ENCODE measurements at regions of chr16 and their contacts with region 1.

Region 1: GRCh38 chr16:71288890-71289733 is at the start of gene CMTR2:
- DNase-seq: peak; percentile 89
- H3K4me3 Mint-ChIP-seq: peak within 1 kb of the TSS; percentile 93
- H3K27ac Mint-ChIP-seq: peak within 1 kb of the TSS; percentile 90
- H3K4me1 Mint-ChIP-seq: peaks cover 26% of the 10 kb centered on the region
- H3K27me3 Mint-ChIP-seq: peaks cover 13% of the 10 kb centered on the region
- total RNA-seq, gene CMTR2: 18.2 and 20.7 TPM in 2 replicates

Region 2: GRCh38 chr16:70746708-70747424 is 542.2 kb before region 1 on chr16:
- intact Hi-C with region 1: loop called (anchors 5 kb)
- DNase-seq: peak; percentile 39
- H3K4me3 Mint-ChIP-seq: peak overlapping the region; percentile 35
- H3K27ac Mint-ChIP-seq: peak overlapping the region; percentile 79
- H3K4me1 Mint-ChIP-seq: peaks cover 43% of the 10 kb centered on the region
- H3K27me3 Mint-ChIP-seq: no peaks in the 10 kb centered on the region

Region 3: DNA sequence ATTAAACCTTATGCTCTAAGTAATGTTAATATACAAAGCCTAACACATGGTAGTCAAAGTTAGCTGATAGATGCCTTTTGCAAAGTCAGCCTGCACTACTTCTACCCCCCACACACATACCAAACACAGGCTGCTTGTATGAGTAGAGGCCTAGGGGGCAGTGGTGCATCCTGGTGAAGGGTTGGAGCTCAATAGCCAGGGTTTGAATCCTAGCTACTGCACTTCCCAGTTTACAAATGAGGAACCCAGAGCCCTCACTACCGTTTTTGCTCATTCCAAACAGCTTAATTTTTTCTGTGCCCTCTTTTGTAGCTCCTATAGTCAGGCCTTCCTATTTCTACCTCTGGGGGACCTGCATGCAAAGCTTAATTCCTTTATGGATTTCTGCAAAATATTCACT is 39.7 kb before region 1 on chr16:
- intact Hi-C with region 1: no loop called
- DNase-seq: no peak
- H3K4me3 Mint-ChIP-seq: no peak overlapping the region
- H3K27ac Mint-ChIP-seq: no peak overlapping the region
- H3K4me1 Mint-ChIP-seq: no peaks in the 10 kb centered on the region
- H3K27me3 Mint-ChIP-seq: peaks cover 2% of the 10 kb centered on the region

Region 4: DNA sequence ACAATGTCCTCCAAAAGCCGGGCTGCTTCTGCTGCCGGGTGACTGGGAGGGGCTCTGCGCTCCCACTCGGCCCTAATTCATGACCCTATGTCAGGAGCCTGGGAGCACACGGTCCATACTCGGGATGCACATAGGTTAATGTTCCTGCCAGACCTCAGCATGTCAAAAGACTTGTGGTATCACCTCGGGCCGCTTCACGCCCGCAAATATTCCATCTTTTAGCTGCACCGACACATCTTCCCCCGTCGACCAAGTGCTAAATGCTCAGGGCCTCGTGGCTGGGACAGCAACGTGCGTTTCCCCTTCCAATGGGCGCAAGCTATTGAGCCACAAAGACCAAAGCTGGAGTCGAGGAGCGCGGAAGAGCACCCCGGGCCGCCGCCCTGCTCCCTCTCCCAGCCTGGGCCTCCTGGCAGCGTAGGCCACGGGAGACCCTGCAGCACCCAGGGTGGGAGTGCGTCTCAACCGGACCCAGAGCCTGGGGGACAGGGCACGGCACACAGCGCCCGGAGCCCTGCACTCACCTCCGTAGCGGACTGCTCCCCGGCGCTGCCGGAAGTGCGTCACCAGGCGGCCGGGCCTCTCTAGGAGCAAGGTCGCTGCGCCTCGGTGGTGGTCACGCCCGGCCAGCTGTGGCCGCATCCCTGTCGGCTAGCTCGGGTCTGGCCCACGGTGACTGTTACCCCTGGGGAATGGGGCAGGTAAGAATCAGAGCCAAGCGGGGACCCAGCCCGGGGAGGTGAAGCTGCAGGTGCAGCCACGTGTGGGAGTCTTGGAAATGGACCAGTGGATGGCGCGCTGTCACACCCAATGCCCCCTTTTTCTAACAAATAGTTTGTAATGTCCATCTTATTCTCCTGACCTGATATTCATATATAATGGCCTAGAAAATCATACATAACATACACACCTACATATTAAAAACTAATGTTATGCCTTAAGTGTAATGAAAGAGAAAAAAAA is 172.9 kb after region 1 on chr16 and contains the start of gene ZNF23:
- intact Hi-C with region 1: loop called (anchors 2 kb)
- DNase-seq: peak; percentile 71
- H3K4me3 Mint-ChIP-seq: peak within 1 kb of the TSS; percentile 86
- H3K27ac Mint-ChIP-seq: peak within 1 kb of the TSS; percentile 86
- H3K4me1 Mint-ChIP-seq: peaks cover 13% of the 10 kb centered on the region
- H3K27me3 Mint-ChIP-seq: peaks cover 1% of the 10 kb centered on the region
- total RNA-seq, gene ZNF23: 4.9 and 6.4 TPM in 2 replicates